ENCODE measurements at regions of chr1 and their contacts with region 1.

Region 1: DNA sequence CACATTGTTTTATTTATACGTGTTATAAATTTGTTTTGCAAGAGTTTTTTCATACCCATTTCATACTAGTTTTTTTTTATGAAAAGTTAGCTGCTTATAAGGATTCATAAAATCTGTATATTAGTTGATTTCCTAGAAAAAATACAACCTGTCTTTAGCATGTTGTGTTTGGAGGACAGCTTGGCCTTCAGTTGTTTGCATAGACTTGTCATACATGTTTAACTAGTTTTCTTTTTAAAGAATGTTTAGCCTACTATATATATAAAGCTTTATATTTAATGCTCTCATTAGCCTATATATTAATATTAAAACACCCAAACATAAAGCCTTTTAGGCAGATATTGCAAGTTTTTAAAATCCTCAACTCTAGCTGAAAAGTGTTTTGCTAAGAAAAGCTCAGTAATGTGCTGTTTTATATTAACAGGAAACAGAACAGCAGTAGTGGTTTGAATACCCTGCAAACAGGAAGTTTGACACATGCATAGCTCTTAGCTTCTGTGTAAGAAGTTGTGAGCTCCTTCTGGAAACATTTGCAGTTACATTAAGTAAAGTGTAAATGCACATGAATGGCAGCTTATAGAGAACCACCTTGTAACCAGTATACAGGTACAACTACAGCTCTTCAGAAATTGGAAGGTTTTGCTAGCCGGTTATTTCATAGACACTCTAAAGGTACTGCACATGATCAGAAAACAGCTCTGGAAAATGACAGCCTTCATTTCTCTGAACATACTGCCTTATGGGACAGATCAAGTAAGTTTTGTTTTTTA is at the start of gene PRKACB:
- DNase-seq: no peak
- ATAC-seq: peak; percentile 72 to 89 (median 84)
- H3K4me3 ChIP-seq: peak within 1 kb of the TSS in 1 of 3 donors; percentile 3
- H3K27ac ChIP-seq: peak within 1 kb of the TSS; percentile 4 to 43 (median 31)
- H3K4me1 ChIP-seq: no peaks in the 10 kb centered on the region
- H3K27me3 ChIP-seq: no peaks in the 10 kb centered on the region
- CTCF ChIP-seq: no peak
- POLR2A ChIP-seq: no peak
- total RNA-seq, gene PRKACB: 11.1 to 19.7 (median 15.6) TPM

Region 2: DNA sequence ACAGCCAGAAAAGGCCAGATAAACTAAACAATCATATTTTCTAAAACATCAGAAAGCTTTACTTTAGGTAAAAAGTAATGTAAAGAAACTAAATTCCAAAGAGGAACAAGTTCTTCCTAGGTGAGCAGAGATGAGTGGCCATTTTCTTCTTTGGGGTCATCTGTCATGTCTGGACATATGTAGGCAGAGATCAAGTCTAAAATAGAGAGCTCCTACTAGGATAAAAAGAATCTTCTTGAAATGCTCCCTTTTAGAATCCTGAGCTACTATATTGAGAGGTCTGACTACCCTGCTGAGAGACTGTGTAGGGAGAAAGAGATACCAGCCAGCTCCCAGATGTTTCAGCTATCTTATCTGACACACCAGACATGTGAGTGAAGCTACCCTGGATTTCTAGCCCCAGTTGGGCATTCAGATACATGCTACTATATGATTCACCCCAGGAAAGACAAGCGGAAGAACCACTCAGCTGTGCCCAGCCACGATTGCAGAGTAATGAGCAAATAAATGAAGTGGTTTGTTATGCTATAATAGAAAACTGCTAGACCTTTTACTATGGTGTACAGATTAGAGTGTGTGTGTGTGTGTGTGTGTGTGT is 225.2 kb before region 1 on chr1:
- intact Hi-C with region 1: no loop called
- DNase-seq: no peak
- ATAC-seq: no peak
- H3K4me3 ChIP-seq: no peak overlapping the region
- H3K27ac ChIP-seq: no peak overlapping the region
- H3K4me1 ChIP-seq: no peaks in the 10 kb centered on the region
- H3K27me3 ChIP-seq: no peaks in the 10 kb centered on the region
- CTCF ChIP-seq: no peak
- POLR2A ChIP-seq: no peak

Region 3: DNA sequence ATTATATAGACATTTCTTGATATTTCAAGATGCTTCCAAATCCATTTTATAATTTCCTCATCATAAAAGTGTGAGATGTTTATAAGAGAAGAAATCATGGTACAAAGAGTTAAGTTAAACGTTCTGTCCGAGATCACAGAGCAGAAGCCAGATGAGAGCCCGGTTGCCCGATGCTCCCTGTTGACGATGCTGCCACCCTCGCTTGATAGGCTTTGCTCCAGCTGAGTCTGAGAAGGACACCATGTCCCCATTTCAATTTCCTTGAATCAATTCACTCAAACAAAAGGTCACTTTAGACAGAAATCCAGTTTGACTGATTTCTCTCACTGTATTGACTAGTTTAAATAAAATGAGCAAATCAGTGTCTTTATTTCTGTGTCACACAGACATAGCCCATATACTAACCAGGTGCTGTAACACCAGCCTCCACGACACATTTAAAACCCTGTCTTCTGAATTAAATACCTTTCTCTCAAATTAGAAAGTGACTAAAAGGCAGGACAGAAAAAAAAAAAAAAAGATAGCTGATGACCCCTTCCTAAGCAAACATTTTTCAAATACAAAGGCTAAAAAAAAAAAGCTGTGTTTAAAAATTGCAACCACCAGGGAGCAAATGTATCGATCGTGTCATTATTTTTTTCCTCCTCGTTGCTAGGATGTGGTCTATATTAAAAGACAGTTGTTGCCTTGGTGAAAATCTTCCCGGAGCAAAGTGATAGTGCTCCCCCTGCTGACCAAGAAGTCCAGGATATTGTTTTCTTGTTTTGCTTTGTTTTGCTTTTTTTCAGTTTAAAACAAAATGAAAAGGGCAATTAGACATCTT is 289.5 kb after region 1 on chr1:
- intact Hi-C with region 1: loop called in 1 of 2 experiments (anchors 10 kb)
- DNase-seq: peak in 2 of 3 donors; percentile 31 to 56
- ATAC-seq: peak; percentile 88 to 92 (median 90)
- H3K4me3 ChIP-seq: peak overlapping the region in 1 of 3 donors; percentile 23
- H3K27ac ChIP-seq: no peak overlapping the region
- H3K4me1 ChIP-seq: peaks cover 0 to 8% (median 3%) of the 10 kb centered on the region in 4 donors
- H3K27me3 ChIP-seq: no peaks in the 10 kb centered on the region
- CTCF ChIP-seq: peak; percentile 71 to 79 (median 78)
- POLR2A ChIP-seq: no peak